ENCODE measurements at regions of chr5 and their contacts with region 1.

Region 1: DNA sequence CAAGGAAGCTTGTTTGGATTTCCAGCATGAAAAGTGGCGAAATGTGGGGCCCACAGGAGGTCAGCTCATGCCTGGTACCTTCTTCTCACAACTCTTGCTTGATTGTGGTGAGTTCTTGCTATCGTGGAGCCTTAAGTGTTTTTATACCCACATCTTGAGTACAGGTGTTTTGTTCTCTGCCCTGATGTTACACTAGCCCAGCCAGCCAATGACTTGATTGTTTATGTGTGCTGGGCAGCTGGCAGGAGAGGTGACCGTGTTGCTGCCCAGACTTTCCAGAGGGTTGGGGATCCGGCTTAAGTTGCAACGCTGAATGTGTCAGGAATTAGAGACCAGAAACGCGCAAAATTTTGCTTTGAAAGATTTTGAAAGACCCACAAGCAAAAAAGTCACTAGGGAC is 24.0 kb upstream of the TPPP start:
- DNase-seq: no peak
- ATAC-seq: no peak
- H3K4me3 ChIP-seq: no peak overlapping the region
- H3K27ac ChIP-seq: no peak overlapping the region
- H3K4me1 ChIP-seq: no peaks in the 10 kb centered on the region
- H3K27me3 ChIP-seq: peaks cover 4% of the 10 kb centered on the region; the same call in 1 of the 2 replicates
- CTCF ChIP-seq: no peak
- POLR2A ChIP-seq: no peak
- RAD21 ChIP-seq: no peak

Region 2: GRCh38 chr5:801472-801871 is 84.3 kb after region 1 on chr5:
- CTCF ChIA-PET with region 1: no interaction called
- POLR2A ChIA-PET with region 1: no interaction called
- dilution Hi-C with region 1: no loop called
- in situ Hi-C with region 1: no loop called
- intact Hi-C with region 1: loop called (anchors 5 kb)
- DNase-seq: no peak
- ATAC-seq: no peak
- H3K4me3 ChIP-seq: no peak overlapping the region
- H3K27ac ChIP-seq: no peak overlapping the region
- H3K4me1 ChIP-seq: no peaks in the 10 kb centered on the region
- H3K27me3 ChIP-seq: peaks cover 3% of the 10 kb centered on the region; the same call in 1 of the 2 replicates
- CTCF ChIP-seq: no peak
- POLR2A ChIP-seq: no peak
- RAD21 ChIP-seq: no peak

Measured in IMR-90 (cell line).